Heart right ventricle (tissue), 16 donors: ENCODE measurements at regions of chr14 and their contacts with region 1.

Region 1: DNA sequence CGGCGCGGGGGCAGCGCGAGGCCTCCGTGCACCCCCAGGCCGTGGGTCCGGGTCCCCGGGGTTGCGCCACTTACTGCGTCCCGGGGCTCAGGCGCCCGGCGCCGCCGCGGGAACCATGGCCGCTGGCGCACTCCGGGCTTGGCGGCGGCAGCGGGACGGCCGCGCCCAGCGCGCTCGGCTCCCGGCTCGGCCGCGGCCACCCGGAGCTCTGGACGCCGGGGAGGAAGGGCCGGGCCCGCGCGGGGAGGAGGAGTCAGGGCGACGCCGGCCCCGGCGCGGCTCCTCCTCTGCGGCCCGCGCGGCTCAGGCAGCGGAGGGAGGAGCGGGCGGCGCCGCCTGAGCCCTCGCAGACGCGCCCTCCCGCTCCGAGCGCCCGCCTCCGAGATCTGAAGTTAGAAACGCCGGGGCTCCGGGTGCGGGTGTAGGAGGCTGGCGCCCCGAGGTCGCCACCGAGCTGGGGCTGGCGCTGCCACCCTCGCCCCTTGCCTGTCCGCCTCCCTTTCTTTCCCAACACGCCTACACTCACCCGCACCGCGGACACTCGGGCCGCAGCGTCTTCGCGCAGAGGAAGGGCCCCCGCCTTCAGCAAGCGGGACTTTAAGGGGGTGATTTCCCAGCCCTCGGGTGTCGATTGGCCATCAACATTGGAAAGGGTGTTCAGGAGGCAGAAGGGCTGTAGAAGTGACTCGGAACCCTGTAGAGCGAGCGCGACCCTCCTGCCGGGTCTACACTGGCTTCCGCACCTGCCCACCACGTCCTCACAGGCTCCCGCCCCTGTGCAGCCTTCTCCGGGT is at the start of gene NIN:
- DNase-seq: peak; percentile 75 to 84
- ATAC-seq: peak; percentile 94 to 98 (median 96)
- H3K4me3 ChIP-seq: peak within 1 kb of the TSS; percentile 75 to 99 (median 92)
- H3K27ac ChIP-seq: peak within 1 kb of the TSS; percentile 86 to 99 (median 94)
- H3K4me1 ChIP-seq: peaks cover 0 to 44% (median 21%) of the 10 kb centered on the region in 9 donors
- H3K27me3 ChIP-seq: no peaks in the 10 kb centered on the region
- CTCF ChIP-seq: no peak
- total RNA-seq, gene NIN: 20.2 to 38.7 (median 26.6) TPM

Region 2: DNA sequence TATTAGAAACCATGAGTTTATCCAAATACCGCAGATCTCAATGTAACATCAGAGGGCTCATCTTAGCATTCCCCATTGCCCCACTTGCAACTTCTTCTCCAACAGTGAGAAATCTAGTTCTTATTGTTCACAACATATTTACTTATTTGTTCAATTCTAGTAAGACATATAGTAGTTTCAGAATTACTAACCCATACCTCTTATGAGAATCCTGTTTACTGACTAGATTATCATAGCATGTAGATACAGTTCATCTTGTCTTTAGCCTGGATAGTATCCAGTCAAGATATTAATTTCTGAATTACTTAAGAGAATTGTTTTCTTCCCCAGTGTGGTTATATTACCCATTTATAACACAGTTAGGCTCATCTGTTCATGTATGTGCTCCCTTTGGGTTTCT is 80.8 kb before region 1 on chr14:
- intact Hi-C with region 1: no loop called
- DNase-seq: no peak
- ATAC-seq: no peak
- H3K4me3 ChIP-seq: no peak overlapping the region
- H3K27ac ChIP-seq: no peak overlapping the region
- H3K4me1 ChIP-seq: no peaks in the 10 kb centered on the region
- H3K27me3 ChIP-seq: no peaks in the 10 kb centered on the region
- CTCF ChIP-seq: no peak

Region 3: DNA sequence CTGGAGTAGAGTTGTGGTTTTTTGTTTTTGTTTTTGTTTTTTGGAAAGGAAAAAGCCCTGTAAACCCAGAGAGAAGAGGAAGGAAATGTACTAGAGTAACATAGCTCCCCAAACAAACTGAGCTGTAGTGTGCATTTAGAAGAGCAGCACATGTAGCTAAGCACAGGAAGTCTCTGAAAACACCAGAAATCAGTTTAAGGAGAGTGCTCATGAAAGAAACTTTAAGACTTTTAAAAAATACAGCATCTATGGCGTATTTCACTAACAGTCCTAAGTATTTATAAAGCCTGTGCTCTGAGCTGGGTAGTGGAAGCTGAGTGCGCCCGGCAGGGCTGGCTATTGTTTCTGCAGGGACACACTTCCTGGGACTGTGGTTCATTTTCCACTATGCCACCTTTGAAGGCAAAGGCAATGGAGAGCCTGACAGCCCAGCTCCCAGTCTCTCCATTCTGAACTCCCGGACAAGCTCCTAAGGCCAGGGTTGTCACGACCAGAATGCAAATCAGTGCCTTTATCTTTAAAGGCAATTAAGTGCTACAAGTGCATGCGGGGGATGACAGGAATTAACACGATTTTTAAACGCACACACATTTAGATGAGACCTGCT is 45.6 kb before region 1 on chr14:
- intact Hi-C with region 1: loop called in 3 of 10 experiments (anchors 5 kb)
- DNase-seq: no peak
- ATAC-seq: peak in 6 of 8 donors; percentile 36 to 65 (median 54)
- H3K4me3 ChIP-seq: no peak overlapping the region
- H3K27ac ChIP-seq: peak overlapping the region in 6 of 10 donors; percentile 9 to 67 (median 60)
- H3K4me1 ChIP-seq: peaks cover 0 to 59% (median 52%) of the 10 kb centered on the region in 9 donors
- H3K27me3 ChIP-seq: no peaks in the 10 kb centered on the region
- CTCF ChIP-seq: no peak

Region 4: GRCh38 chr14:50792051-50792477 is 39.1 kb before region 1 on chr14:
- intact Hi-C with region 1: loop called in 4 of 10 experiments (anchors 1 to 5 kb)
- DNase-seq: no peak
- ATAC-seq: no peak
- H3K4me3 ChIP-seq: peak overlapping the region; percentile 4 to 48 (median 37)
- H3K27ac ChIP-seq: peak overlapping the region; percentile 51 to 79 (median 72)
- H3K4me1 ChIP-seq: peaks cover 0 to 49% (median 27%) of the 10 kb centered on the region in 9 donors
- H3K27me3 ChIP-seq: no peaks in the 10 kb centered on the region
- CTCF ChIP-seq: no peak

Region 5: GRCh38 chr14:50901361-50901760 is 70.2 kb after region 1 on chr14:
- intact Hi-C with region 1: no loop called
- DNase-seq: no peak
- ATAC-seq: no peak
- H3K4me3 ChIP-seq: no peak overlapping the region
- H3K27ac ChIP-seq: no peak overlapping the region
- H3K4me1 ChIP-seq: no peaks in the 10 kb centered on the region
- H3K27me3 ChIP-seq: no peaks in the 10 kb centered on the region
- CTCF ChIP-seq: no peak